Thyroid gland (tissue), 4 donors: ENCODE measurements at regions of chr3 and their contacts with region 1.

Region 1: GRCh38 chr3:49171119-49171774 is at the start of gene KLHDC8B:
- DNase-seq: peak; percentile 87 to 90
- H3K4me3 ChIP-seq: peak within 1 kb of the TSS; percentile 63 to 91 (median 71)
- H3K27ac ChIP-seq: peak within 1 kb of the TSS; percentile 75 to 90 (median 89)
- H3K4me1 ChIP-seq: peaks cover 32 to 43% of the 10 kb centered on the region in 2 donors
- H3K27me3 ChIP-seq: no peaks in the 10 kb centered on the region
- CTCF ChIP-seq: peak; percentile 75 to 98 (median 95)
- POLR2A ChIP-seq: peak in 1 of 2 donors; percentile 80
- total RNA-seq, gene KLHDC8B: 47.0 to 60.9 (median 57.2) TPM

Region 2: DNA sequence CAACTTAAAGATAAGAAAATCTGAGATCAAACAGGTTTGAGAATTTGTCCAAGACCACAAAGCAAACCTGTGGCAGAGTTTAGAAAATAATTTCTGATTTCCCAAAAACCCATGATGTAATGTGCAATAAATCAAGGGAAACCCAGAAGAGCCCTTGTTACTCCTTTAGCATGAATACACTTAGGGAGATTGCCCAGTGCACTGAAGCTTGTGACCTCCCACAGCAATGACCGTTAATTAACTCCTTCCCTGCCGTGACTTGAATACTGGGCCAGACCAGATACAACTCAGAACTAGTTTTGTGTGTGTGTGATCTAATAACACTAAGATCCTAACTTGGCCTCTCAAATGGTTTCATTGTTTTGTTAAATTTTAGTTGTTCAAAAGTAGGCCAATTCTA is 326.1 kb before region 1 on chr3:
- intact Hi-C with region 1: no loop called
- DNase-seq: no peak
- H3K4me3 ChIP-seq: no peak overlapping the region
- H3K27ac ChIP-seq: no peak overlapping the region
- H3K4me1 ChIP-seq: peaks cover 20 to 24% of the 10 kb centered on the region in 2 donors
- H3K27me3 ChIP-seq: no peaks in the 10 kb centered on the region
- CTCF ChIP-seq: no peak
- POLR2A ChIP-seq: no peak

Region 3: GRCh38 chr3:48949376-48949717 is 221.9 kb before region 1 on chr3:
- intact Hi-C with region 1: no loop called
- DNase-seq: no peak
- H3K4me3 ChIP-seq: no peak overlapping the region
- H3K27ac ChIP-seq: peak overlapping the region; percentile 63 to 75 (median 63)
- H3K4me1 ChIP-seq: peaks cover 10 to 14% of the 10 kb centered on the region in 2 donors
- H3K27me3 ChIP-seq: no peaks in the 10 kb centered on the region
- CTCF ChIP-seq: no peak
- POLR2A ChIP-seq: no peak

Region 4: GRCh38 chr3:49276475-49277382 is 105.5 kb after region 1 on chr3 and contains the start of gene C3orf62:
- intact Hi-C with region 1: loop called (anchors 5 kb)
- DNase-seq: peak; percentile 91
- H3K4me3 ChIP-seq: peak within 1 kb of the TSS; percentile 10 to 40 (median 40)
- H3K27ac ChIP-seq: peak within 1 kb of the TSS; percentile 88 to 96 (median 93)
- H3K4me1 ChIP-seq: peaks cover 7 to 26% of the 10 kb centered on the region in 2 donors
- H3K27me3 ChIP-seq: no peaks in the 10 kb centered on the region
- CTCF ChIP-seq: no peak
- POLR2A ChIP-seq: peak in 1 of 2 donors; percentile 47
- total RNA-seq, gene C3orf62: 2.8 to 6.2 (median 3.8) TPM

Region 5: DNA sequence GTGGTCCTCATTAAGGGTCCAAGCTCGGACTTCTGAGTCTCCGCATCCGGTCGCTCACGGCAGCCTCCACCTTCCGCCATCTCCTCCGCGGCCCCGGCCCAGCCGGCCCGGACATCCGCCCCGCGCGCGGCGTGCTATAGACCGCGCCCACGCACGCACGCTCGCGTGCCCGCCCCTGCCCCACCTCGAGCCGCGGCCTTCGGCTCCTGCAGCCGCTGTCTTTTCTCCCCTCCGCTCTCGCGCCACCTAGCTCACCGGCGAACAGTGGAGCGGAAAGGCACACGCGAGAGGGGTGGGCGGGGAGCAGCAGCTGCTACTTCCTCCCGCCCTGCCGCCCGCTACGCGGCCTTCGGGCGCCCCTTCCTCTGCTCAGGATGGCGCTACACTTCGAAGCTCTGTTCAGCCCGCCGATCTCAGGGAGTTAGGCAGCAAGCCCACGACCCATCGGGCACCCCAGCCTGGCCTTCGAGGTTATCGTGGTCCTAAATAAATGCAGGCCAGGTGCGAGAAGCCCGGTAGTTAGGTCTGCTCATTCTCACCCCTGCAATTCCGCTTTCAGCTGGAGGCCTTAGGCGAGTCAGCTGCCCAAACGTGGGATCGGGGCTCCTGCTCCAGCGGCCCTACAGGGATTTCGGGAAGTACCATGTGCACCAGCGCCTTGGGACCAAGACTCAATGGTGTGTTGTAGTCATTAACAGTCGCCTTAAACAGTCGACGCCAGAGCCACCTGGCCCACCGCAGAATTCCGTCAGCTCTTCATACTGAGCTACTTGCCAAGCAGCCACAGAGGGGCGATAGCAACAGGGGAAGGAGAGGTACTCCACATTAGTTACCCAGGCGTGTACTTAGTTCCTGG is 168.9 kb after region 1 on chr3 and contains the start of gene USP4:
- intact Hi-C with region 1: loop called (anchors 10 kb)
- DNase-seq: peak; percentile 93 to 95
- H3K4me3 ChIP-seq: peak within 1 kb of the TSS; percentile 60 to 90 (median 86)
- H3K27ac ChIP-seq: peak within 1 kb of the TSS; percentile 85 to 98 (median 94)
- H3K4me1 ChIP-seq: peaks cover 11 to 30% of the 10 kb centered on the region in 2 donors
- H3K27me3 ChIP-seq: no peaks in the 10 kb centered on the region
- CTCF ChIP-seq: peak in 4 of 6 experiments; percentile 42 to 58 (median 50)
- POLR2A ChIP-seq: peak in 1 of 2 donors; percentile 76
- total RNA-seq, gene USP4: 19.8 to 32.6 (median 28.5) TPM

Region 6: DNA sequence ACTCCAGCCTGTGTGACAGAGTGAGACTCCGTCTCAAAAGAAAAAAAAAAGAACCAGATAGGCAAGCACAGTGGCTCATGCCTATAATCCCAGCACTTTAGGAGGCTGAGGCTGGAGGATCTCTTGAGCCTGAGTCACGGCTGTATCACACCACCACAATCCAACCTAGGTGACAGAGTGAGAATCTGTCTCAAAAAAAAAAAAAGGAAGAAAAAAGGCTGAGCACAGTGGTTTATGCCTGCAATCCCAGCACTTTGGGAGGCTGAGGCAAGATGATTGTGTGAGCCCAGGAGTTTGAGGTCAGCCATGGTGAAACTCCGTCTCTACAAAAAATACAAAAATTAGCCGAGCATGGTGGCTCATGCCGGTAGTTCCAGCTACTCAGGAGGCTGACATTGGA is 263.5 kb after region 1 on chr3:
- intact Hi-C with region 1: loop called (anchors 10 kb)
- DNase-seq: no peak
- H3K4me3 ChIP-seq: no peak overlapping the region
- H3K27ac ChIP-seq: no peak overlapping the region
- H3K4me1 ChIP-seq: no peaks in the 10 kb centered on the region
- H3K27me3 ChIP-seq: no peaks in the 10 kb centered on the region
- CTCF ChIP-seq: no peak
- POLR2A ChIP-seq: no peak